Heart right ventricle (tissue), 16 donors: ENCODE measurements at regions of chr3 and their contacts with region 1.

Region 1: GRCh38 chr3:75171630-75172230 is 492.4 kb upstream of the FRG2C start:
- DNase-seq: no peak
- ATAC-seq: no peak
- H3K4me3 ChIP-seq: no peak overlapping the region
- H3K27ac ChIP-seq: no peak overlapping the region
- H3K4me1 ChIP-seq: no peaks in the 10 kb centered on the region
- H3K27me3 ChIP-seq: peaks cover 0 to 34% (median 0%) of the 10 kb centered on the region in 7 donors
- CTCF ChIP-seq: peak in 8 of 9 donors; percentile 10 to 52 (median 34)

Region 2: DNA sequence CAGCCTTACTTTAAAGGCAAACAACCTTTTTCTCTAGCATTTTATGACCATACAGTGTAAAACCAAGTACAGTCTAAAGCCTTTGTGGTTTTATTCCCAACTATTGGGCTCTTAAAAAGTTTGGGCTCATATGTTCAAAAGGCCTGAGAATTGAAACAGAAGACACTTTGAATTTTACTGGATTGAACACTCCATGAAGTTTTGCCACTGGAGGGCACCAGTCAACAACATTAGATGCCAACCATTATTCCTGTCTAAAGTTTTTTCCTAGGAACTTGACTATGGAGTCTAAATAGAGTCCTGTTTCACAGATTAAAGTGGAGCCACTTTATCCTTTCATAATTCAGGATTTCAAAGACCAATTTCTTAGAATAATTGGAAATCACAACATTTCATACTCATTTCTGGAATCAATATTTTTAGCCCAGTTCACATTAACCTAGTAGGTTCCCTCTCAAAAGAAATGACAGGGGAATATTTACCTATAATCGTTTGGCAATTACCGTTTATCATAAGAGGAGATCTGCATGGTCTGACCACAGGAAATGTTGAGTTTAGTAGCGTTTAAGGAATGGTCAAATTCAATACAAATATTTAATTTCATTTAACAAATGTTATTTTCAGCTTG is 1302.9 kb before region 1 on chr3:
- intact Hi-C with region 1: loop called in 4 of 10 experiments (anchors 5 to 10 kb)
- DNase-seq: peak in 1 of 2 donors; percentile 29
- ATAC-seq: peak in 4 of 8 donors; percentile 41 to 67 (median 56)
- H3K4me3 ChIP-seq: no peak overlapping the region
- H3K27ac ChIP-seq: no peak overlapping the region
- H3K4me1 ChIP-seq: peaks cover 0 to 5% (median 0%) of the 10 kb centered on the region in 9 donors
- H3K27me3 ChIP-seq: no peaks in the 10 kb centered on the region
- CTCF ChIP-seq: peak; percentile 18 to 65 (median 54)

Region 3: DNA sequence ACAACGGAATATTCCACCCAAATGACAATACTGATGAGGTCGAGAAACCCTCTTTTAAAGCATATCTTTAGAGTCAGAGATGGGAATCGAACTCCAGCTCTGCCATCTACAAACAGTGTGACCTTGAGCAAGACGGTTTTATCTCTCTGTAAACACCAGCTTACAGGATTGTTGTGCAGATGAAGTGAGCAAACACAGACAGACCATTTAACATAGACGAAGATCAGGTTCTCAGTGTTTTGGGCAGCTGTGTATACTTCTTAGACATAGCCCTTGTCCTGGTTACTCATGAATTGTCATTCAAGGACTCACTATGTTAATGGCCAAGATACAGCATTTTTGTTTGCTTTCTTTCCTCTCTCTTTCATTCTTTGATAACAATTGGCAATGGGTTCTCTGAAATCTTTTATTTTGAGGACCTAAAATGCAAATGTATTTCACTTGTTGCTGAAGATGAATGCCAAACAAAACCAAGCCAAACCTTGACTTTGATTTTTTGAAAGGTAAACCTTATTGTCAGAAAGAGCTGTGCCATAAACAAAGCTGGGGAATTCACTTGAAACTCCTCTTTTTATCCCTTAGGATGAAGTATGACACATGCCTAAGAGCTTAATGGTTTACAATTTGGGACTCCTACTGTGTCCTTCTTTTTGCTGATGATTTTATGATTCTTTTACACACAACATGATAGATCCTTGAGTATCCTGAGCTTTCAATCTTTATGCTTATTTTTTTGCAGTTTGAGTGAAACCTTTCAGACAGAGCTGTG is 1296.9 kb before region 1 on chr3:
- intact Hi-C with region 1: loop called in 4 of 10 experiments (anchors 5 to 10 kb)
- DNase-seq: no peak
- ATAC-seq: no peak
- H3K4me3 ChIP-seq: no peak overlapping the region
- H3K27ac ChIP-seq: no peak overlapping the region
- H3K4me1 ChIP-seq: no peaks in the 10 kb centered on the region
- H3K27me3 ChIP-seq: no peaks in the 10 kb centered on the region
- CTCF ChIP-seq: no peak

Region 4: GRCh38 chr3:74267588-74268184 is 904.0 kb before region 1 on chr3:
- intact Hi-C with region 1: loop called in 1 of 10 experiments (anchors 5 kb)
- DNase-seq: peak in 1 of 2 donors; percentile 15
- ATAC-seq: peak in 1 of 8 donors; percentile 23
- H3K4me3 ChIP-seq: no peak overlapping the region
- H3K27ac ChIP-seq: no peak overlapping the region
- H3K4me1 ChIP-seq: no peaks in the 10 kb centered on the region
- H3K27me3 ChIP-seq: no peaks in the 10 kb centered on the region
- CTCF ChIP-seq: peak; percentile 56 to 81 (median 72)

Region 5: DNA sequence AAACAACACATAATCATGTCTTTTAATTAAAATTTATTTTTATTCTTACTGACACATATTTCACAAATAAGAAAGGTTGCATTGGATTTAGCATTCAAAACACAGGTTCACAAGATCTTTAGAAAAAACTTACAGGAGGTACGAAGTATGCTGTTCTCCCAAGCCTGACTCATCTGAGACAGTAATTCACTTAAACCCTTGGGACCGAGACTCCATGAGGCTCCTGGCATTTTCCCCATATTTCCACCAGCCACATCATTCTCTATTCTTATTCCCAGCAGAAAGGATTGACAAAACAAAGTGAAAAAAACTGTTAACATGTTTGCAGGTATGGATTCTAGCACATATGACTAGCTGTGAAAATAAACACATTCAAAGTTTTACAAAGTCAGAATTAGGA is 609.8 kb before region 1 on chr3:
- intact Hi-C with region 1: no loop called
- DNase-seq: no peak
- ATAC-seq: no peak
- H3K4me3 ChIP-seq: no peak overlapping the region
- H3K27ac ChIP-seq: no peak overlapping the region
- H3K4me1 ChIP-seq: no peaks in the 10 kb centered on the region
- H3K27me3 ChIP-seq: no peaks in the 10 kb centered on the region
- CTCF ChIP-seq: no peak

Region 6: GRCh38 chr3:76096836-76097588 is 925.3 kb after region 1 on chr3:
- intact Hi-C with region 1: loop called in 1 of 10 experiments (anchors 10 kb)
- DNase-seq: no peak
- ATAC-seq: no peak
- H3K4me3 ChIP-seq: no peak overlapping the region
- H3K27ac ChIP-seq: no peak overlapping the region
- H3K4me1 ChIP-seq: no peaks in the 10 kb centered on the region
- H3K27me3 ChIP-seq: no peaks in the 10 kb centered on the region
- CTCF ChIP-seq: no peak